ENCODE measurements at regions of chr2 and their contacts with region 1.

Region 1: DNA sequence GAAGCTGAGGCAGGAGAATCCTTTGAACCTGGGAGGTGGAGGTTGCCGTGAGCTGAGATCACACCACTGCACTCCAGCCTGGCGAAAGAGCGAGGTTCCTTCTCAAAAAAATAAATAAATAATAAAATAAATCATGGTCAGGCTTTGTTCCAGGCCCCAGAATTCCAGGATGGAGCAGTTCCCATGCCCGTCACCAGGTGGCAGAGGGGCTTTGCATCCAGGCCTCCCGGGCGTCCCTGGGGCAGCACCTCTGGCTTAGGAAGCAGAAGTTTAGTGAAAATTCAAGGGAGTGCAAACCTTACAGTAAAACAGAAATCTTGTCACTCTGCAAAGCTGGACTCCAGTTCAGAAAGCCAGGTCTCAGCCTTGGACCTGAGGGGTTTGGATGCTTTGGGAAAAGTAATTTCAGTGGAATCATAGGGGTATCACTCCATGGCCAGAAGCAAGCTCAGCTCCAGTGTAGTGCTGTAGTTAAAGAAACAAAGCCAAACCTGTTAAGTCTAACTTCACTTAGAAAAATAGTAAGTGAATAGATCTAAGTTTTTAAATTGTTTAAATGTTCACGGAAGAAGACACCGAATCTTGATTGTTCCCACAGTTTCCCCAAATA is 512.7 kb downstream of the CMPK2 start:
- DNase-seq: no peak
- H3K4me3 ChIP-seq: no peak overlapping the region
- H3K27ac ChIP-seq: no peak overlapping the region
- H3K4me1 ChIP-seq: no peaks in the 10 kb centered on the region
- H3K27me3 ChIP-seq: no peaks in the 10 kb centered on the region
- CTCF ChIP-seq: no peak
- POLR2A ChIP-seq: no peak

Region 2: GRCh38 chr2:6139916-6140315 is 213.1 kb before region 1 on chr2:
- CTCF ChIA-PET with region 1: no interaction called
- POLR2A ChIA-PET with region 1: no interaction called
- dilution Hi-C with region 1: no loop called
- intact Hi-C with region 1: no loop called
- DNase-seq: no peak
- H3K4me3 ChIP-seq: no peak overlapping the region
- H3K27ac ChIP-seq: no peak overlapping the region
- H3K4me1 ChIP-seq: no peaks in the 10 kb centered on the region
- H3K27me3 ChIP-seq: no peaks in the 10 kb centered on the region
- CTCF ChIP-seq: no peak
- POLR2A ChIP-seq: no peak

Region 3: DNA sequence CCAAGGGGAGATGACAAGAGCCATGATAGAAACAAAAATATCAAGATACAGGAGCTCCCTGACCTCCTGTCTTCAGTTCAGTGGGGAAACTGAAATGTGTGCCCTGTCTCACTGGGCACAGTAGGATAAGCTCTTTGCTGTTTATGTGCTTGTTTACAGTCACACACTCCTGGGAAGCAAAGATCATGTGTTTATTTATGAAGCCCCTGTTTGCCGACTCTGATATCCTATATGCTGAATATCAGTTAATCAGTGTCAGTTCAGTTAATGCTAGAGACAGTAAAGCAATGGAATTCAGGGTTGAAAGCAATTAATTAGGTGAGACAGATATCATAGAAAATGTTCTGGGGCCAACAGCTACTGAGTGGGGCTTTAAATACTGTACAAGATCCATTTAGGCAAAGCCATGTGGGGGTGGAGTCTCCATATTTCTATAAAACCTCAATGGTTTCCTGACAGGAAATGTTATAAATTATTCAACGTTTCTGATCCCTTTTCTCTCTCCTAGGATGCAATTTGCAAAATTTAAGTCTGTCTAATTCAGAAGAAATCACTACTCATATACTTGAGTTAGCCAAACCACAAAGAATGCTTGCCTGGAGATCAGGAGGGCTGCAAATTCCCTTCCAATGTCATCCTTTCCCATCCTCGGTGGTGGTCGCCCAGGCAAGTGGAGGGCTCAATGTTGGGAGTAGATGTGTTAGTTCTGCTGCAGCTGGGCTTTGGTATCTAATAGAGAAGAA is 38.6 kb before region 1 on chr2:
- CTCF ChIA-PET with region 1: no interaction called
- POLR2A ChIA-PET with region 1: no interaction called
- dilution Hi-C with region 1: no loop called
- intact Hi-C with region 1: no loop called
- DNase-seq: no peak
- H3K4me3 ChIP-seq: no peak overlapping the region
- H3K27ac ChIP-seq: no peak overlapping the region
- H3K4me1 ChIP-seq: no peaks in the 10 kb centered on the region
- H3K27me3 ChIP-seq: no peaks in the 10 kb centered on the region
- CTCF ChIP-seq: no peak
- POLR2A ChIP-seq: no peak

Region 4: DNA sequence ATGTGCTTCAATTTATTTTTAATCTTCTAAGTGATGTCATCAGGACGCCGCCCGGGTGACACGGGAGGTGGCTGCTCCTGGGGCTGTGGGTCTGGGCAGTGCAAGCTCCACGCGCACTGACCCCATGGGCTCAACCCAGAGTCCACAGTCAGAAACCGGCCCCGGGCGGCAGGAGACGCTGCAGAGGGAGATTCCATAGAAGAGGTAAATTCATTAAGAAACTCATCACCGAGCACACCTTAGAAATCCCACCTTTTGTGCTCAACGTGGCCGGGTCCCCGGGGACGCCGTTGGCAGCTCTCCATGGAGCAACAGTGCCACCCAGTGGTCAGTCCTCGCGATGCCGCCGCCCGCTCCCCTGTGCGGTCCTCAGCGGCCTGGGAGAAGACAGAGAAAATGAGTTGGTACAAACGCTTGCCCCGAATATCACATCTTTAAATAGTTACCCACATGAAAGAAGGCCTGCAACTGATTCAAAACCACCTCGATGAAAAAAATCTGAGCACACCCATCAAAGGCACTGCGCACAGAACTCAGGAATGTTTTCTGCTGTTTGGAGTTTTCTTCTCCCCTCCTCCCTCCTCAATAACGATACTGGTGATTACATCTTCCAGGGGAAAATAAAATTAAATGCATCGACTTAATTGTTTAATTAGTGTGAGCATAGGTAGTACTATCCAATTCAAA is 420.1 kb after region 1 on chr2:
- CTCF ChIA-PET with region 1: no interaction called
- POLR2A ChIA-PET with region 1: no interaction called
- dilution Hi-C with region 1: no loop called
- intact Hi-C with region 1: loop called (anchors 1 kb)
- DNase-seq: peak; percentile 9
- H3K4me3 ChIP-seq: no peak overlapping the region
- H3K27ac ChIP-seq: no peak overlapping the region
- H3K4me1 ChIP-seq: no peaks in the 10 kb centered on the region
- H3K27me3 ChIP-seq: no peaks in the 10 kb centered on the region
- CTCF ChIP-seq: peak; percentile 85 to 86
- POLR2A ChIP-seq: no peak